ENCODE measurements at regions of chr1 and their contacts with region 1.

Region 1: GRCh38 chr1:24289937-24290595 is 29.1 kb upstream of the GRHL3 start:
- DNase-seq: peak; percentile 83
- H3K4me3 ChIP-seq: no peak overlapping the region
- H3K27ac ChIP-seq: peak overlapping the region in 3 of 4 donors; percentile 8 to 39 (median 39)
- H3K4me1 ChIP-seq: peaks cover 0 to 25% (median 8%) of the 10 kb centered on the region in 4 donors
- H3K27me3 ChIP-seq: no peaks in the 10 kb centered on the region
- CTCF ChIP-seq: no peak
- EP300 ChIP-seq: no peak
- POLR2A ChIP-seq: no peak

Region 2: GRCh38 chr1:24276786-24277185 is 13.3 kb before region 1 on chr1:
- in situ Hi-C with region 1: no loop called
- intact Hi-C with region 1: loop called (anchors 1 kb)
- DNase-seq: no peak
- H3K4me3 ChIP-seq: no peak overlapping the region
- H3K27ac ChIP-seq: no peak overlapping the region
- H3K4me1 ChIP-seq: no peaks in the 10 kb centered on the region
- H3K27me3 ChIP-seq: peaks cover 20% of the 10 kb centered on the region
- CTCF ChIP-seq: no peak
- EP300 ChIP-seq: no peak
- POLR2A ChIP-seq: no peak

Region 3: GRCh38 chr1:24308365-24309015 is 18.4 kb after region 1 on chr1:
- in situ Hi-C with region 1: no loop called
- intact Hi-C with region 1: no loop called
- DNase-seq: no peak
- H3K4me3 ChIP-seq: no peak overlapping the region
- H3K27ac ChIP-seq: no peak overlapping the region
- H3K4me1 ChIP-seq: no peaks in the 10 kb centered on the region
- H3K27me3 ChIP-seq: peaks cover 5% of the 10 kb centered on the region
- CTCF ChIP-seq: no peak
- EP300 ChIP-seq: no peak
- POLR2A ChIP-seq: no peak

Region 4: GRCh38 chr1:24769656-24770651 is 479.9 kb after region 1 on chr1:
- in situ Hi-C with region 1: no loop called
- intact Hi-C with region 1: loop called (anchors 10 kb)
- DNase-seq: no peak
- H3K4me3 ChIP-seq: no peak overlapping the region
- H3K27ac ChIP-seq: peak overlapping the region; percentile 74 to 88 (median 84)
- H3K4me1 ChIP-seq: peaks cover 4 to 39% (median 16%) of the 10 kb centered on the region in 4 donors
- H3K27me3 ChIP-seq: no peaks in the 10 kb centered on the region
- CTCF ChIP-seq: no peak
- EP300 ChIP-seq: no peak
- POLR2A ChIP-seq: no peak